Transverse colon (tissue), 4 donors: ENCODE measurements at regions of chr4 and their contacts with region 1.

Region 1: DNA sequence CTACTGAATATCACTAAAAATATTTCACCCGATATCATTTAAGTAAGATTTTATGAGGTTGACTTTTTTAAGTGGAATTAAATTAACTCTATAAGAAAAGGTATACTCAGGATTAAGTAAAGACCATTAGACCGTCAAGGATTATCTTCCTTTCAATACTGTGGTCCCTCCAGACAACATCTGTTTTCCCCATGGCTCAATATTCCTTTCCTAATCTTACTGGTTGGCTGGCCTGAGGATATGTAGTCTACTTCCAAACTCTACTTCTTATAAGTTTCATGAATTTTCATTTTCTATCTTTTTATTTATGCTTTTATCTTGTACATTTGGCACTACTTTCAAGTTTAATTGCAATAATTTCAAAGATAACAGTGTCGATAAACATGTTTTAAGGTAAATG is 725.4 kb downstream of the PCDH7 start:
- DNase-seq: no peak
- H3K4me3 ChIP-seq: no peak overlapping the region
- H3K27ac ChIP-seq: no peak overlapping the region
- H3K4me1 ChIP-seq: no peaks in the 10 kb centered on the region
- H3K27me3 ChIP-seq: no peaks in the 10 kb centered on the region
- CTCF ChIP-seq: no peak
- EP300 ChIP-seq: no peak
- POLR2A ChIP-seq: no peak

Region 2: GRCh38 chr4:31294655-31295480 is 150.7 kb before region 1 on chr4:
- in situ Hi-C with region 1: no loop called
- intact Hi-C with region 1: no loop called
- DNase-seq: no peak
- H3K4me3 ChIP-seq: no peak overlapping the region
- H3K27ac ChIP-seq: no peak overlapping the region
- H3K4me1 ChIP-seq: no peaks in the 10 kb centered on the region
- H3K27me3 ChIP-seq: no peaks in the 10 kb centered on the region
- CTCF ChIP-seq: no peak
- EP300 ChIP-seq: no peak
- POLR2A ChIP-seq: no peak

Region 3: DNA sequence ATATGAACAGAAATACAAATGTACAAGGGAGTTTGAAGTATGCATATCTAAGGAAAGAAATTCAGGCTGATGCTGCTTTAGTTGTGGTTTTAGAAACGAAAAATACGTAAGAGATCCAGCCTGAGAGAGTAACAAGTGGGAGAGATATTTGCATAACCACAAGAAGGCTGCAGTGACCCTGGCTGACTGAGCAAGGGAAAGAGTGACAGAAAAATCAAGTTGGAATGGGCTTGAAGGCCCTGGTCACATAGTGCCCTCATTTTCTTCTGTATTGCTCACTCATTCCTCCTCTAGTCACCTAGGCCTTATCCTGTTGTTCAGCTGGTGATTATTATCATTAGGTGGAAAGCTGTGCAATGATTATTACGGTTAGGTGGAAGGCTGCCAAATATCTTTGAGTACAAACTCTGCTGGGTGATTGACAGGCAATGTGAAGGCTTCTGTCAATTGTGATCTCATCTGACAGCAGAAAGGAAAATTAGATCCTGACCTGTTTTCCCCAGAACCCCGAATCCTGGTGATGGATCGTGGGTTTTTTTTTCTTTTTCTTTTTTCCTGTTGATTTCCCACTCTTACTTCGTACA is 1658.8 kb after region 1 on chr4:
- in situ Hi-C with region 1: no loop called
- intact Hi-C with region 1: loop called (anchors 5 kb)
- DNase-seq: no peak
- H3K4me3 ChIP-seq: no peak overlapping the region
- H3K27ac ChIP-seq: no peak overlapping the region
- H3K4me1 ChIP-seq: no peaks in the 10 kb centered on the region
- H3K27me3 ChIP-seq: no peaks in the 10 kb centered on the region
- CTCF ChIP-seq: no peak
- EP300 ChIP-seq: no peak
- POLR2A ChIP-seq: no peak

Region 4: GRCh38 chr4:33255094-33255493 is 1809.6 kb after region 1 on chr4:
- in situ Hi-C with region 1: no loop called
- intact Hi-C with region 1: no loop called
- DNase-seq: no peak
- H3K4me3 ChIP-seq: no peak overlapping the region
- H3K27ac ChIP-seq: no peak overlapping the region
- H3K4me1 ChIP-seq: no peaks in the 10 kb centered on the region
- H3K27me3 ChIP-seq: no peaks in the 10 kb centered on the region
- CTCF ChIP-seq: no peak
- EP300 ChIP-seq: no peak
- POLR2A ChIP-seq: no peak